ENCODE measurements at regions of chr12 and their contacts with region 1.

Region 1: DNA sequence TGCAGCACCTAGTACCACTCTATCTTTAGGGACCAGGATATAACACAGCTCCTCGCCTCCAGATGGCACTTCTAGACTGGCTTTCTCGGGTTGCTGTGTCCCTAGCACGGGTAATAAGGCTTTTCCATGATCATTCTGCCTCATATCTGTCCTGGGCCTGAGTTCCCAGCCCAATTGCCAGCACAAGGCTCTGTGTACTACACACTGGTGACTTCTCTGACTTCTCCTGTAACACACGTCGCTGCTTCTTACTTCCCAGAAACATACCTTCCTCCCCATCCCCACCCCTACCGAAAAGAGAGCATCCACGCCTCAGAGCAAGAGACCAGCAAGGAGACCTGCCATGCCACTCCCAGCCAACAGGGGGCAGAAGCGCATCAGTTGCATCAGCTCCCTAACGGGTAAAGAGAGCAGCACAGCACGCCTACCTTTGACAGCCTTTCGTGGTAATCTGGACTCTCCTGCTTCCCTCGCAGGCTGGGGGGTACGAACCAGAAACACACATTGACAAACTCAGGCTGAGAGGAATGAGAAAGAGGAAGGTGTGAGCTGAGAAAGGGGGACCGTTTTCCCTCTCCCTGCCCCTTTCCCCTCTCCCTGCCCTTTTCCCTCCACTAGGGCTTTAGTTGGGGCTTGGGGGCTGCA is 21.2 kb upstream of the ZNF740 start:
- DNase-seq: peak; percentile 97
- ATAC-seq: peak; percentile 100
- H3K4me3 Mint-ChIP-seq: peak overlapping the region; percentile 11
- H3K27ac Mint-ChIP-seq: peak overlapping the region; percentile 62
- H3K4me1 Mint-ChIP-seq: peaks cover 10% of the 10 kb centered on the region
- H3K27me3 Mint-ChIP-seq: no peaks in the 10 kb centered on the region
- CTCF ChIP-seq: peak; percentile 96

Region 2: GRCh38 chr12:53014709-53015108 is 144.6 kb before region 1 on chr12:
- CTCF ChIA-PET with region 1: no interaction called
- POLR2A ChIA-PET with region 1: no interaction called
- intact Hi-C with region 1: no loop called
- DNase-seq: no peak
- ATAC-seq: peak; percentile 30
- H3K4me3 Mint-ChIP-seq: no peak overlapping the region
- H3K27ac Mint-ChIP-seq: peak overlapping the region; percentile 77
- H3K4me1 Mint-ChIP-seq: peaks cover 52% of the 10 kb centered on the region
- H3K27me3 Mint-ChIP-seq: no peaks in the 10 kb centered on the region
- CTCF ChIP-seq: no peak

Region 3: DNA sequence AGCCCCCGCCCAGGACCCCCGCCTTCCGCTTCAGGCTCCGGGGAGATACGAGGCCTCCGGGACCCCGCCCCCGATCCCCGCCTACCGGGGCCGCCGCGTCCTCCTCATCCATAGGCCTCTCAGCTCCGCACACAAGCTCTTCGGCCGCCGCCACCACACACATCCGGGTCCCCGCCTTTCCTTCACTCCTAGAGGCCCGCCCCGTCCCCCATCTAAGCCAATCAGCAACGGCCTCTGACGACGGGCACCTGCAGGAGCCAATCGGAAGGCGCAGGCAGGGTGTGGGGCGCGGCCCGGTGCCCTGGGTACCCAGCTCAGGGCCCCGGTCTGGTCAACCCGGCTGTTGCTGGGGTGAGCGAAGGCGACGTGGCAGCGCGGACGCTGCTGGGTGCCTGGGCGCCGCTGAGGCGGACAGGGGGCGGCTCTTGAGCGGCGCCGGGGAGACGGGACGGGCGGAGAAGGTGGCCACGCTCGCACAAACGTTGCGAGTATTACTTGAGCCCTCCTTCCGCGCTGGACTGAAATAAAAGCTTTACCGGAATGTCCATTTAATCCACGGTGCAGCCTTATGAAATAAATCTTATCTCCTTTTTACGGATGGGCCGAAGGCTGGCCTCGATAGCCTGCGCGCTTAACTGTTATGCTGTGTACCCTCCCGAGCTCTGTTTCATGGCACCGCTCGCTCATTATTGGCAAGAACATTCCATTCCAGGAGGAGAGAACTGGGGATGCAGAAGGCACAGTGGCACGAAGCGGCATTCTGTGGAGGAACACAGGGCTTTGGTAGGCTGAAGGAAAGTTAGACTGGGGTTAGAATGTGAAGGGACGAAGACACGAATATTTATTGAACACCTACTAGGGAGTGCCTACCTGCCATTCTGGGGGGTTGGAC is 79.8 kb before region 1 on chr12 and contains the start of gene SPRYD3:
- CTCF ChIA-PET with region 1: interaction called, 11 read pairs
- POLR2A ChIA-PET with region 1: no interaction called
- intact Hi-C with region 1: no loop called
- DNase-seq: peak; percentile 98
- ATAC-seq: peak; percentile 98
- H3K4me3 Mint-ChIP-seq: peak within 1 kb of the TSS; percentile 83
- H3K27ac Mint-ChIP-seq: peak within 1 kb of the TSS; percentile 80
- H3K4me1 Mint-ChIP-seq: peaks cover 34% of the 10 kb centered on the region
- H3K27me3 Mint-ChIP-seq: no peaks in the 10 kb centered on the region
- CTCF ChIP-seq: no peak
- total RNA-seq, gene SPRYD3: 24.8 to 25.0 TPM

Region 4: GRCh38 chr12:53180220-53180930 is 21.1 kb after region 1 on chr12 and contains the starts of genes CSAD and ZNF740:
- CTCF ChIA-PET with region 1: interaction called, 199 read pairs
- POLR2A ChIA-PET with region 1: interaction called, 22 read pairs
- intact Hi-C with region 1: no loop called
- DNase-seq: peak; percentile 99
- ATAC-seq: peak; percentile 95
- H3K4me3 Mint-ChIP-seq: peak within 1 kb of the TSS; percentile 89
- H3K27ac Mint-ChIP-seq: peak within 1 kb of the TSS; percentile 96
- H3K4me1 Mint-ChIP-seq: peaks cover 51% of the 10 kb centered on the region
- H3K27me3 Mint-ChIP-seq: no peaks in the 10 kb centered on the region
- CTCF ChIP-seq: no peak
- total RNA-seq, gene CSAD: 13.8 to 18.6 TPM
- total RNA-seq, gene ZNF740: 31.3 to 35.9 TPM

Region 5: DNA sequence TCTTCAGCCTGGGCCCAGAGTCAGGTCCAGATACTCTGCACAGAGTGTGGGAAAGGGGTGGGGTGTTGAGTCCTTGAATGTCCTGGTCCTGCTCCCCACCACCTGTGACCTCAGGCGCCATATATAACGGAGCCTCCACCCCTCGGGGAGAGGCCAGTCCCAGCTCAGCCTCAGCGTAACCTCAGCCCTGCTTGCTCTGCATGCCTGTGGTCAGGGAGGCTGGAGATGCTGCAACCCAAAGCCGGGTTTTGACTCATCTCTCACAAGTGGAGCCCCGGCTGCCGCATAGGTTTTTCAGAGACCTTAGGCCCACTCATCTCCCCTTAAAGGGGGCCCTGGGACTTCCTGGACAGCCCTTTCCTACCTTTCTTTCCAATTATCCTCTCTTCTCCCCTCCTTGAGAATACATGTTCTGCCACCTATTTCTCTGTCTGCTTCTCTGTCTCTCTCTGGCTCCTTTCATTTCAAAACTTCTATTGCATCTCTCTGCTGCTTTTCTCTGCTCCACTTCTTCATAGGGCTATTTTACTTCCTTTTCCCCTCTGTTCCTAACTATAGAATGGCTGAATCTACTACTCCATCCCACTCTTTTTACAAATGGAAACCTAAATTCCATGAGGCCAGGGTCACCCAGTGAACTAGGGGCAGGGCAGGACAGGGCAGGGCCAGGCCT is 46.6 kb after region 1 on chr12:
- CTCF ChIA-PET with region 1: interaction called, 34 read pairs
- POLR2A ChIA-PET with region 1: interaction called, 5 read pairs
- intact Hi-C with region 1: loop called (anchors 5 kb)
- DNase-seq: peak; percentile 92
- ATAC-seq: peak; percentile 72
- H3K4me3 Mint-ChIP-seq: peak overlapping the region; percentile 93
- H3K27ac Mint-ChIP-seq: peak overlapping the region; percentile 91
- H3K4me1 Mint-ChIP-seq: peaks cover 68% of the 10 kb centered on the region
- H3K27me3 Mint-ChIP-seq: no peaks in the 10 kb centered on the region
- CTCF ChIP-seq: no peak

Region 6: DNA sequence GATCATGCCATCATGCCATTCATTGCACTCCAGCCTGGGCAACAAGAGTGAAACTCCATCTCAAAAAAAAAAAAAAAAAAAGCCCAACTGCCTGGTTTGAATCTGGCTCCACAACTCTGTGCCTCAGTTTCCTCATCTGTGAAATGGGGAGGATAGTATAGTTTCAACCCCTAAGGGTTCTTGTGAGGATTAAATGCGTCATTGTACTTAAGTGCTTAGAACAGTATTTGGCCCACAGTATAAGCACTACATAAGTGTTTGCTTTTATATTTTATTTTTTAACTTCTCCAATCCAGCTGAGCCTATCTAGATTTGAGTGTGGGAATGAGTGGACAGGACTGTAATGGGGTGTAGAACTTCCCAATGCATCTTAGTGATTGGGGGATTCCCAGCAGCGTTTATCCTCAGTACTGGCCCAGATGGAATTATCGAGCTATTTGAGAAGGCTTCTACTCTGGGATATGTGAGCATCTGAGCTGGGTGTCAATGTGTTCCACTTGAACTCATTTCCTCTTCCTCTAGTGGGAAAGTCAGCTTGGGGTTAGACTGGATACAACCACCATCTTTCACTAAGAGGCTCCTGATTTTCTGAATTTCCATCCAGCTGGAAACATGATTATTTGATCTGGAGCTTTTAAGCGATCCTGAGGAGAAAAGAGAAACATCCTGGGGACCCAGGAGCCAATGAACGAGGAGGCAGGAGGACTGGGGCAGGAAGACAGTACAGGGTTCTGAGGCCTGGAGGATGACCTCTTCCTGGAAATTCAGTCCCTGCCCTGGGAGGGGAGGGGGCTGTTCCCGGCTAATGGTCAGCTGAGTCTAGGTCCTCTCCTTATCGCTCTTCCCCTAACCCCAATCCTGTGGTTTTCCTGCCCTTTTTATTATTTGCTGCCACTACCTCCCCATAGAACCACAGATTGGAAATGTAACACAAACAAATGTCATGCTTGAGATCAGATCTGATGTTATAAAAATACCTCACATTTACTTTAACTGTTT is 99.5 kb after region 1 on chr12:
- CTCF ChIA-PET with region 1: interaction called, 18 read pairs
- POLR2A ChIA-PET with region 1: no interaction called
- intact Hi-C with region 1: no loop called
- DNase-seq: no peak
- ATAC-seq: no peak
- H3K4me3 Mint-ChIP-seq: no peak overlapping the region
- H3K27ac Mint-ChIP-seq: no peak overlapping the region
- H3K4me1 Mint-ChIP-seq: peaks cover 26% of the 10 kb centered on the region
- H3K27me3 Mint-ChIP-seq: no peaks in the 10 kb centered on the region
- CTCF ChIP-seq: no peak

Region 7: GRCh38 chr12:53295070-53295890 is 136.0 kb after region 1 on chr12 and contains the start of gene PFDN5:
- CTCF ChIA-PET with region 1: interaction called, 25 read pairs
- POLR2A ChIA-PET with region 1: interaction called, 4 read pairs
- intact Hi-C with region 1: no loop called
- DNase-seq: peak; percentile 94
- ATAC-seq: peak; percentile 90
- H3K4me3 Mint-ChIP-seq: peak within 1 kb of the TSS; percentile 98
- H3K27ac Mint-ChIP-seq: peak within 1 kb of the TSS; percentile 91
- H3K4me1 Mint-ChIP-seq: peaks cover 43% of the 10 kb centered on the region
- H3K27me3 Mint-ChIP-seq: no peaks in the 10 kb centered on the region
- CTCF ChIP-seq: no peak
- total RNA-seq, gene PFDN5: 322 to 373 TPM

Region 8: DNA sequence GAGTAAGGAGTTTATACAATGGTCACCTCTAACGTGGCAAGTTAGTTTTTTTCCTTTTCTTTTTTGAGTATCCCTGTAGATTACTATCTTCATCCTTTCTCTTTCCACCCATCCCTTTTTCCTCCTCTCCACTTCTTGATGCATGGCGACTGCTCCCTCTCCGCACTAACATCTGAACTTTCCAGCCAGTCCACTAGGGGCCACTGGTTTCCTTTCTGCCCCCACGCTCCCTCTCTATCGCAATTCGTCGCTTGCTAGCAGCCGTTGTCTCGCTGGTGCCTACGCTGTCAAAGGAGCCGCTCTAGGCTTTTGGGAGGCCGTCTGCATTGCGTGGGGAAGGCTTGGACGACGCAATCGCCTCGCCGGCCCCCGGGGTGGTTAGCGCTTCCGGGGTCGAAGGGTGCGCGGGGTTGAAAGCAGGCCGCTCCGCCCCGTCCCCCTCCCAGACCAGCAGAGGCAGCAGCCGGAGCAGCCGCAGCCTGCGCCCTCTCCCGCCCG is 292.4 kb after region 1 on chr12 and contains the start of gene PCBP2:
- CTCF ChIA-PET with region 1: no interaction called
- POLR2A ChIA-PET with region 1: no interaction called
- intact Hi-C with region 1: no loop called
- DNase-seq: peak; percentile 98
- ATAC-seq: peak; percentile 94
- H3K4me3 Mint-ChIP-seq: peak within 1 kb of the TSS; percentile 91
- H3K27ac Mint-ChIP-seq: peak within 1 kb of the TSS; percentile 99
- H3K4me1 Mint-ChIP-seq: peaks cover 38% of the 10 kb centered on the region
- H3K27me3 Mint-ChIP-seq: no peaks in the 10 kb centered on the region
- CTCF ChIP-seq: peak; percentile 86
- total RNA-seq, gene PCBP2: 958 to 973 TPM

Region 9: DNA sequence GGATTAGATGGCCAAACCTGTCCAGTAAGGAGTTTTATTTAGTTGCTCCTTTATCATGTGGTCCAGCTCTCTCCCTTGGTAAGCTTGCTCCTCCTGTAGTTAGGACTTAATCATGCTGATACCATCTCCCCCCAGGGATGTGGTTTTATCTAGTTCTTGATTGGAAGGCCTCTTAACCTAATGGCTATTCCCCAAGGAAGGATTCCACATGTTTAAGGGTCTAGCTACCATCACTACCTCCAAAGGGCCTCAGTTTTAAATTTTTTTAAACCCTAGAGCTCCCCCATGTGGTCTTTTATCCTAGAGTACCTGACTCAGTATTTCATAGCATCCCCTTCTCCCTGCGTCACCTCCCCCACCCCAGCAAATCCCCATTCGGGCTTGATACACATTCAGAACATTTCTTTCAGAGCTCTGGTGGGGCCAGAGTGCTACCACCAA is 317.5 kb after region 1 on chr12:
- CTCF ChIA-PET with region 1: no interaction called
- POLR2A ChIA-PET with region 1: no interaction called
- intact Hi-C with region 1: no loop called
- DNase-seq: no peak
- ATAC-seq: no peak
- H3K4me3 Mint-ChIP-seq: no peak overlapping the region
- H3K27ac Mint-ChIP-seq: peak overlapping the region; percentile 34
- H3K4me1 Mint-ChIP-seq: peaks cover 52% of the 10 kb centered on the region
- H3K27me3 Mint-ChIP-seq: no peaks in the 10 kb centered on the region
- CTCF ChIP-seq: peak; percentile 43

Region 10: DNA sequence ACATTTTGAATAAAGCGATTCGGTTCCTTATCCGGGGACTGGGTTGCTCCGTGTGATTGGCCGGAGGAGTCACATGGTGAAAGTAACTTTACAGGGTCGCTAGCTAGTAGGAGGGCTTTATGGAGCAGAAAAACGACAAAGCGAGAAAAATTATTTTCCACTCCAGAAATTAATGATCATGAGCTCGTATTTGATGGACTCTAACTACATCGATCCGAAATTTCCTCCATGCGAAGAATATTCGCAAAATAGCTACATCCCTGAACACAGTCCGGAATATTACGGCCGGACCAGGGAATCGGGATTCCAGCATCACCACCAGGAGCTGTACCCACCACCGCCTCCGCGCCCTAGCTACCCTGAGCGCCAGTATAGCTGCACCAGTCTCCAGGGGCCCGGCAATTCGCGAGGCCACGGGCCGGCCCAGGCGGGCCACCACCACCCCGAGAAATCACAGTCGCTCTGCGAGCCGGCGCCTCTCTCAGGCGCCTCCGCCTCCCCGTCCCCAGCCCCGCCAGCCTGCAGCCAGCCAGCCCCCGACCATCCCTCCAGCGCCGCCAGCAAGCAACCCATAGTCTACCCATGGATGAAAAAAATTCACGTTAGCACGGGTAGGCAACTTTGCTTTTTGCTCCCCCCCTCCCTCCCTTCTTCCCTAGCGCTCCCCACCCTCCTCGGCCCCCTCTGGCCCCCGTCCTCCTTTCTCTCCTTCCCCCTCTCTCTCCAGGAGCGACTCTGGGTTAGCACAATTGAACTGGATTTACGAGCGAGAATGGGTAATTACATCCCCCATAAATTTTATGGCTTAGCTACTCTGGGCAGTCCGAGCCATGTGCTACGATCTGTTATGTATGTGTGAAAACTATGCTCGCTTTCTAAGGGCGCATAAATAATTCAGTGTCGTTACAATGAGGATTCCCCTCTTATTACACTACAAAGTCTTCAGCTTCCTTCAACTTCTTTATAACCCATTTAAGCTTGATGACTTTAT is 894.7 kb after region 1 on chr12 and contains the start of gene HOXC4:
- CTCF ChIA-PET with region 1: no interaction called
- POLR2A ChIA-PET with region 1: no interaction called
- intact Hi-C with region 1: no loop called
- DNase-seq: peak; percentile 48
- ATAC-seq: peak; percentile 72
- H3K4me3 Mint-ChIP-seq: peak within 1 kb of the TSS; percentile 73
- H3K27ac Mint-ChIP-seq: peak within 1 kb of the TSS; percentile 82
- H3K4me1 Mint-ChIP-seq: peaks cover 30% of the 10 kb centered on the region
- H3K27me3 Mint-ChIP-seq: peaks cover 62% of the 10 kb centered on the region
- CTCF ChIP-seq: no peak
- total RNA-seq, gene HOXC4: 0.89 to 1.2 TPM